Right lobe of liver (tissue), 6 donors: ENCODE measurements at regions of chr5 and their contacts with region 1.

Region 1: DNA sequence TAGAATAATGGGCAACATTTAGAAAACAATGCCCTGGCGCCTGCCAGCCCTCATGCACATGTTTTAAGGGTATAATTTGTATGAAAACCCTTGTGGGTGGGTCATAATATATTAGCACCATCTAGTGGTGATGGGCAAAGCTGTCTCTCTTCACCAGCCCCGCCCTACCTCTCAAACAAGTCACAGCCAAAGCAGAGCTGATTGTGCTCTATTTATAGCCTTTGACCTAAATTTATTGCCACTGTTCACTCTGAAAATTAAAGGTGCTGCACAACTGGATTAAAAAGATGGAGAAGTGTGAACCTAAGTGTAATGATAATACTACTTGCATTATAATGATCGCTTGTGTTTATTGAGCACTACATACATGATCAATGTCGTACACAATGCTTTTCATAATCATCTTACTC is 131.9 kb upstream of the ANKH start:
- DNase-seq: peak in 2 of 3 donors; percentile 41 to 62
- ATAC-seq: peak; percentile 92 to 97 (median 96)
- H3K4me3 ChIP-seq: no peak overlapping the region
- H3K27ac ChIP-seq: no peak overlapping the region
- H3K4me1 ChIP-seq: peaks cover 0 to 8% (median 3%) of the 10 kb centered on the region in 4 donors
- H3K27me3 ChIP-seq: no peaks in the 10 kb centered on the region
- CTCF ChIP-seq: peak; percentile 80 to 89 (median 88)
- POLR2A ChIP-seq: no peak

Region 2: DNA sequence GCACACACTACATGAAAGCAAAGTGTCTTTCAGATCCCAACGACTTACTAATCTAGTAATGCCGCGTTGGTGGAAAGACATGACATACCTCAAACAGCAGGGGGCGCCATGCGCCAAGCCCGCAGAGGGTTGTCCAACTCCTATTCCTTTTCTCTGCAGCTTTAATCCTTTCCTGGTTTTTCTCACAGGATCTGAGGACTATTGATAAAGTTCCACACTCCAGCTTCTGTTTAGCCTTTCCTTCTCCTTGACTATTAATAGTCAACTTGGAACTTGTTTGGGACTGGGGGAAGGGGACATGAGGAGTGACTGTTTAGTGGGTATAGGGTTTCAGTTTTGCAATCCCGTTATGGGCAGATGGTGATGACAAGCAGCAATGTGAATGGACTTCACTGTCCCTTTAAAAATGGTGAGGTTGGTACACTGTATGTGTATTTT is 276.1 kb before region 1 on chr5:
- intact Hi-C with region 1: loop called in 1 of 2 experiments (anchors 5 kb)
- DNase-seq: peak; percentile 80 to 83 (median 83)
- ATAC-seq: peak; percentile 73 to 80 (median 78)
- H3K4me3 ChIP-seq: no peak overlapping the region
- H3K27ac ChIP-seq: peak overlapping the region in 2 of 3 donors; percentile 83 to 93
- H3K4me1 ChIP-seq: peaks cover 0 to 19% (median 9%) of the 10 kb centered on the region in 4 donors
- H3K27me3 ChIP-seq: no peaks in the 10 kb centered on the region
- CTCF ChIP-seq: peak; percentile 93 to 97 (median 96)
- POLR2A ChIP-seq: no peak